K562 (cell line): ENCODE measurements at regions of chr9 and their contacts with region 1.

Region 1: DNA sequence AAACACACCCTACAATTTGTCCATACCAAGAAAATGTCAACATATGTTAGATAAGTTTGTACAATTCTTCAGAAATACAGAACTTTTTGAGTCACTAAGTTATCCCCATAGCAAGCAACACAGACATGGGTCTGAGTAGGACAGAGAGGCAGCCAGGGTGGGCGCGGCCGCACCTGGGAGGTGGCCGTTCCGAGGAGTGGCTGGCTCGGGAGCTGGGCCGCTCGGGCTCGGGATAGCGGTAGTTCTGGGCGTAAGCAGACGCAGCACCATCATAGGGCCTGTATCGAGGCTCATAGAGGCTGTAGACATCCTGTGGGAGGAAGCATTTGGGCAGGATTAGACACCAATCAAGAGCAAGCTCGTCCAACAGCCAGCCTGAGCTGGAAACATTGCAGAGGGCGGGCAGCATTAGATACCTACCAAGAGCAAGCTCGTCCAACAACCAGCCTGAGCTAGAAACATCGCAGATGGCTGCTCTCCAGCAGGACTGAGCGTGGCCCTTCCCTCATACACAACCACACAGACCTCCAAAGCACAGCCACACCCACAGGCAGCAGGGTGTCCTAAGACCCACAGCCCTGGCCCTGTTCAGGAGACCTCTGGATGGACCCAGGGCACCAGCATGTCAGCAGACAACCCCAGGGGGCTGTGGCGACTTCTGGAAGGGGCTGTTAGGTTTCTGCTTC is 10.9 kb downstream of the SEC16A start:
- DNase-seq: no peak
- ATAC-seq: no peak
- H3K4me3 ChIP-seq: no peak overlapping the region
- H3K27ac ChIP-seq: no peak overlapping the region
- H3K4me1 ChIP-seq: peaks cover 0 to 23% of the 10 kb centered on the region in 2 experiments; a peak in 3 of 5 replicates
- H3K27me3 ChIP-seq: no peaks in the 10 kb centered on the region
- CTCF ChIP-seq: no peak
- EP300 ChIP-seq: no peak
- POLR2A ChIP-seq: no peak
- RAD21 ChIP-seq: no peak

Region 2: DNA sequence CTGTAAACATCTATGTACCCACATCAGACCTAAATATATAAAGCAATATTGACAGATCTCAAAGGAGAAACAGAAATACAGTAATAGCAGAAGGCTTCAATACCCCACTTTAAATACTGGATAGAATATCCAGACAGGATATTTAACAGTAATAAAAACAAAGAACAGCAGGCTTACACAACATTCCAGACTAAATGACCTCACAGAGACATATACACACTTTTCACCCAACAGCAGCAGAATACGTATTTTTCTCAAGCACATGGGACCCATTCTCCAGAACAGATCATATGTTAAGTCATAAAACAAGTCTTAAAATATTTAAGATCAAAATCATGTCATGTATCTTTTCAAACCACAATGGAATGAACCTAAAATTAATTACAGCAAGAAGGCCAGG is 641.4 kb before region 1 on chr9:
- CTCF ChIA-PET with region 1: no interaction called
- POLR2A ChIA-PET with region 1: no interaction called
- in situ Hi-C with region 1: no loop called
- intact Hi-C with region 1: no loop called
- DNase-seq: no peak
- ATAC-seq: no peak
- H3K4me3 ChIP-seq: no peak overlapping the region
- H3K27ac ChIP-seq: no peak overlapping the region
- H3K4me1 ChIP-seq: peaks cover 0 to 9% of the 10 kb centered on the region in 2 experiments; a peak in 1 of 5 replicates
- H3K27me3 ChIP-seq: no peaks in the 10 kb centered on the region
- CTCF ChIP-seq: no peak
- EP300 ChIP-seq: no peak
- POLR2A ChIP-seq: no peak
- RAD21 ChIP-seq: no peak

Region 3: GRCh38 chr9:136455043-136456002 is 16.6 kb before region 1 on chr9:
- CTCF ChIA-PET with region 1: no interaction called
- POLR2A ChIA-PET with region 1: interaction called, 12 read pairs
- in situ Hi-C with region 1: no loop called
- intact Hi-C with region 1: no loop called
- DNase-seq: no peak
- ATAC-seq: no peak; the same call in 2 of the 3 replicates
- H3K4me3 ChIP-seq: no peak overlapping the region
- H3K27ac ChIP-seq: no peak overlapping the region
- H3K4me1 ChIP-seq: 0 out of 5 replicates have a peak, but pooled peaks cover 0 to 3% of the 10 kb centered on the region in 2 experiments
- H3K27me3 ChIP-seq: no peaks in the 10 kb centered on the region
- CTCF ChIP-seq: no peak
- EP300 ChIP-seq: no peak
- POLR2A ChIP-seq: no peak
- RAD21 ChIP-seq: no peak